Ascending aorta (tissue), 2 donors: ENCODE measurements at regions of chr4 and their contacts with region 1.

Region 1: GRCh38 chr4:9691238-9692065 is 90.0 kb upstream of the DRD5 start:
- DNase-seq: peak; percentile 87 to 98
- H3K4me3 ChIP-seq: peak overlapping the region; percentile 56 to 74
- H3K27ac ChIP-seq: peak overlapping the region; percentile 60 to 66
- H3K4me1 ChIP-seq: no peaks in the 10 kb centered on the region
- H3K27me3 ChIP-seq: no peaks in the 10 kb centered on the region
- CTCF ChIP-seq: no peak

Region 2: GRCh38 chr4:10063544-10064300 is 372.3 kb after region 1 on chr4:
- intact Hi-C with region 1: loop called (anchors 5 kb)
- DNase-seq: peak; percentile 48 to 90
- H3K4me3 ChIP-seq: no peak overlapping the region
- H3K27ac ChIP-seq: peak overlapping the region; percentile 34 to 67
- H3K4me1 ChIP-seq: peaks cover 0 to 4% of the 10 kb centered on the region in 2 donors
- H3K27me3 ChIP-seq: no peaks in the 10 kb centered on the region
- CTCF ChIP-seq: peak; percentile 66 to 84 (median 76)